Right ventricle myocardium superior (tissue), 1 donor: ENCODE measurements at regions of chr13 and their contacts with region 1.

Region 1: DNA sequence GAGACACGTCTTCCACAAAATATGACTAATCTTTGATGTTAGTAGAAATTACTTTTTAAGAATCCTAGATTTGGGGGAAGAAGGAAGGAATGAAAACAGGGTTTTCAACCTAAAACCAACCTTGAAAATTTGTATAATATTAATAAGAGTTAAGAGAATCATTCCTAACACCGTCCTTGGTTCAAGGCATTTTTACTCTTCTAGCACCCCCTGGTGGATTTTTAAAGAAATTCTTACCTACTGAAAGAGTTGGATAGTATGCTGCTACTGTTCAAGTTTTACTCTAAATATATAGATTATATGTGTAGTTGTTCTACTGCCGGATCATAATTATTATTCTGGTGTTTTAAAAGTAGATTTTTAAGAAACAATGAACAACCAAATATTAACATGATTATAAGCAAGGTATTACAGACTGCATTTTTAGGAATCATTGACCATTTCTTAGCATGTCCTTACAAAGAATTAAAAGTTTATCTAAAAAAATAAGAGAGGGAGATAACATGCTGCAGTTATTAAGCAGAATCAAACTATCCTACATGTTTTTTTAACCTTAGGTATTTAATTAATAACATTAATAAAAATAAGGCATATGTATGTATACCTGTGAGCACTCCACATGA is 7.4 kb upstream of the SLITRK6 start:
- DNase-seq: no peak
- ATAC-seq: no peak

Region 2: DNA sequence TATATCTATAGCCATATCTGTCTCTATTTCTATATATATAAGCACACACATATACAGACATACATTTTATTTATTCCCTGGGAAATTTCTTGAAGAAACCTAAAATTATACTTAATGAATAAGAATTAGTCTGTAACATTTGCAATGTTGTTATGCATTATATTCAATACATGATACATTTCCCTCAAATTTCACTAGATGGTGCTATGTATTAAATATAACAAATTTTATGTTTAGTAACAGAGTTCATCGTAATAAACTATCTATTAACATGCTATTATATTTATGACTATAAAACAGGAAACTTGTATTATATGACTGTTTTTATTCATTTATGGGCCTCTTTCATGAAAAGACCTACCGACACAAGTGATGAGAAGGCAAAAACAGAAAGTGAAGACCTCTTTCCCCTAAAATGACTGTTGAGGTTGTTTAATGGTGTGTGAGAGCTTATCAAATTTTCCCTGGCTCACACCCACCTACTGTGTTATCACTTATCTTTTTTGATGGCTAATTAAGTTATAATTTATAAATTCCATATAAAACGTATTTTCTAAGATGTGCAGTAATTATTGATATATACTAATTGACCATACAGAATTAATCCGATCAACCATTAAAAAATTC is 889.3 kb before region 1 on chr13:
- intact Hi-C with region 1: loop called (anchors 10 kb)
- DNase-seq: no peak
- ATAC-seq: no peak